GM12878 (cell line): ENCODE measurements at regions of chr6 and their contacts with region 1.

Region 1: DNA sequence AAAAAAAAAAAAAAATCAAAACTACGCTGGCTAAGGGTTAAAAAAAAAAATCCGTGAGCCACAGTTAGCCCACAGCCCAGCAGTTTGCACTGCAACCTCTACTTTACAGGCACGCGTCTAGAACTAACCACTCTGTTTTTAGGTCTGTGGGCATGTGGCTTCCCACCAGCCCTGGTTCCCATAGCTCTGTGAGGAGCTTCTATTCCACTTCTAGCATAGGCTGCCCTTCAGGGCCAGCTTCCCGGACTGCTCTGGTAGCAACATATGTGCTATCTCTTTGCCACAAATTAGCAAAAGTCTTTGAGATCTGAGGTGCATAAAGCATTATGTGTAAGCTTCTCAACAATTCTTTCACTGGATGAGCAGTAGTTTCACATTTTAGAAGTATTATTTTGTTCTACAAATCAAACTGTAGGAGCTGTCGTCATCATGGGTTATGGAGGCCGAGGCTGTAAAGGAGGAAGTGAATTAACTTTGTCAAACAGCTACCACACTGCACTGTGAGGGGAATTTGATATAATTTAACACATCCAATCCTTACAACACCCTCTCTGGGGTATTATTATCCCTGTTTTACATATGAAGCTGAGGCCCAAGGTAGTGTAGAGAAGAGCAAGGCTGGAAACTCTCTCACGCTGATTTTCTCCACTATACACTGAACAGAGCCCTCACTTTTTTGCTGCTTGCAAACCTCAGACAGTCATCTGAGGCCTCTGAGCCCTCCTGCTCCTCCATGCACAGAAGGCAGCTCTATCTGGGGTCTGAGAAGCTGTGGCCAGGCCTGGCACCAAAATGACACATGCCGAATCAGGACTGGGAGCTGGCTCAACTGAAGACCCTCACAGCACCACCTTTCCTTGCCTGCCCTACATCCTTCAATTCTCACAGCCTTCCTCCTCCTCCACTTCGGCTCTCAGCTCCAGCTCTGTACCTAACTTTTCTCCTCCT is 35.4 kb downstream of the MAN1A1 start:
- DNase-seq: peak; percentile 42
- ATAC-seq: peak; percentile 78
- H3K4me3 ChIP-seq: no peak overlapping the region; the same call in 1 of the 2 replicates
- H3K27ac ChIP-seq: peak overlapping the region; percentile 73
- H3K4me1 ChIP-seq: peaks cover 28% of the 10 kb centered on the region
- H3K27me3 ChIP-seq: no peaks in the 10 kb centered on the region
- CTCF ChIP-seq: no peak
- EP300 ChIP-seq: peak in 1 of 2 experiments; percentile 86; a peak in 1 of 4 replicates
- POLR2A ChIP-seq: peak; percentile 46; the same call in 1 of the 2 replicates
- RAD21 ChIP-seq: no peak

Region 2: DNA sequence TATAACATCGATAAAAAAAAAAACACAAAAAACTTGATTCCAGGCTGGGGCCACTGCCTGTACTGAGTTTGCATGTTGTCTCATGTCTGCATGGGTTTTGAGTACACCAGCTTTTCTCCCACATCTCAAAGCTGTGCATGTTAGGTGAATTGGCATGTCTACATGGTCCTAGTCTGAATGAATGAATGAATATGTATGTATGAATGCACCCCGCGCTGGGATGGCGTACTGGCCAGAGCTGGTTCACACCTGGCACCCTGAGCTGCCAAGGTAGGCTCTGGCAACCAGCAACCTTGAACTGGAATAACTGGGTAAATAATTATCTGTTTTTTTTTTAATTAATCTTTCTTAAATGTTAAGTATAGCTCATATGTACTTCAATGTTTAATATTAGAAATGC is 95.7 kb before region 1 on chr6:
- CTCF ChIA-PET with region 1: interaction called, 4 read pairs
- POLR2A ChIA-PET with region 1: interaction called, 4 read pairs
- RAD21 ChIA-PET with region 1: interaction called, 10 read pairs
- SMC1A ChIA-PET with region 1: interaction called, 9 read pairs
- in situ Hi-C with region 1: no loop called
- intact Hi-C with region 1: loop called (anchors 5 kb)
- DNase-seq: no peak
- ATAC-seq: no peak
- H3K4me3 ChIP-seq: no peak overlapping the region
- H3K27ac ChIP-seq: no peak overlapping the region
- H3K4me1 ChIP-seq: no peaks in the 10 kb centered on the region
- H3K27me3 ChIP-seq: no peaks in the 10 kb centered on the region
- CTCF ChIP-seq: no peak
- EP300 ChIP-seq: no peak
- POLR2A ChIP-seq: no peak
- RAD21 ChIP-seq: no peak

Region 3: DNA sequence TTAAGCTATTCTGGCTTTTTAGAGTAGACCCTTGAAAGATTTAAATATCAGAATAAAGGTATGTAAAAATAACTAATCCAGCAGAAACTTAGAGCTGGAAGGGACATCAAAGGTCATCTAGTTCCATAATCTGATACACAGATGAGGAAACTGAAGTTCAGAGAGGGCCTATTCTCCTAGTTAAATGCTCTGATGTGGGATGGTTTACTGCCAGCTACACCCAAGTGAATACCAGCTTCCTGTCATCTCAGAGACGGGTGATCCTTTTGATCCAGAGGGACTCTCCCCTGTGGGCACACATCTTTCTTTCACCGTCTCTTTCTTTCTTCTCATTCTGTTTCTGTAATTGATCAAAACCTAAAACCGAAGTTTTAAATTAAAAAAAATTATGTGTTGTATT is 58.7 kb before region 1 on chr6:
- CTCF ChIA-PET with region 1: interaction called, 7 read pairs
- POLR2A ChIA-PET with region 1: no interaction called
- RAD21 ChIA-PET with region 1: interaction called, 9 read pairs
- SMC1A ChIA-PET with region 1: interaction called, 14 read pairs
- in situ Hi-C with region 1: no loop called
- intact Hi-C with region 1: no loop called
- DNase-seq: no peak
- ATAC-seq: 0 out of 3 replicates have a peak, but pooled peaks have one; percentile 29
- H3K4me3 ChIP-seq: no peak overlapping the region
- H3K27ac ChIP-seq: no peak overlapping the region
- H3K4me1 ChIP-seq: no peaks in the 10 kb centered on the region
- H3K27me3 ChIP-seq: no peaks in the 10 kb centered on the region
- CTCF ChIP-seq: no peak
- EP300 ChIP-seq: no peak
- POLR2A ChIP-seq: no peak
- RAD21 ChIP-seq: no peak

Region 4: DNA sequence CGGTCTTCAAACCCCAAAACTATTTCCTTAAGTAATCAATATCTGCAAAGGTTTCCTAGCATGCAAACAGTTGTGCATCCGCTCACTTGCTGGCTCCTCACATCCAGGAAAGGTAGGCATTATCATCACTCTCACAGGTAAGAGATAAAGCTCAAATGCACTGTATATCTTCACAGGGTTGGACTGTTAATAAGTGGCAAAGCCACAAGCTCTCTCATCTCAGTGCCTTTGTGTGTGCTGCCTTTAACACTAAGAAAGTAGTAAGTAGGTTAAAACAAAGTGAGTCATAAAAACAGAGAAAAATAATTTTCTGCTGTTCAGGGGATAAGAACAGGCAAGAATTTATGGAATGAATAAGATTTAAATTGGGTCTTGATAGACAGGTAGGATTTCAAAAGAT is 14.0 kb after region 1 on chr6:
- CTCF ChIA-PET with region 1: interaction called, 62 read pairs
- POLR2A ChIA-PET with region 1: interaction called, 114 read pairs
- RAD21 ChIA-PET with region 1: interaction called, 414 read pairs
- SMC1A ChIA-PET with region 1: interaction called, 359 read pairs
- in situ Hi-C with region 1: no loop called
- intact Hi-C with region 1: no loop called
- DNase-seq: no peak
- ATAC-seq: peak; percentile 27
- H3K4me3 ChIP-seq: no peak overlapping the region
- H3K27ac ChIP-seq: no peak overlapping the region
- H3K4me1 ChIP-seq: no peaks in the 10 kb centered on the region
- H3K27me3 ChIP-seq: no peaks in the 10 kb centered on the region
- CTCF ChIP-seq: no peak
- EP300 ChIP-seq: no peak
- POLR2A ChIP-seq: no peak
- RAD21 ChIP-seq: no peak

Region 5: DNA sequence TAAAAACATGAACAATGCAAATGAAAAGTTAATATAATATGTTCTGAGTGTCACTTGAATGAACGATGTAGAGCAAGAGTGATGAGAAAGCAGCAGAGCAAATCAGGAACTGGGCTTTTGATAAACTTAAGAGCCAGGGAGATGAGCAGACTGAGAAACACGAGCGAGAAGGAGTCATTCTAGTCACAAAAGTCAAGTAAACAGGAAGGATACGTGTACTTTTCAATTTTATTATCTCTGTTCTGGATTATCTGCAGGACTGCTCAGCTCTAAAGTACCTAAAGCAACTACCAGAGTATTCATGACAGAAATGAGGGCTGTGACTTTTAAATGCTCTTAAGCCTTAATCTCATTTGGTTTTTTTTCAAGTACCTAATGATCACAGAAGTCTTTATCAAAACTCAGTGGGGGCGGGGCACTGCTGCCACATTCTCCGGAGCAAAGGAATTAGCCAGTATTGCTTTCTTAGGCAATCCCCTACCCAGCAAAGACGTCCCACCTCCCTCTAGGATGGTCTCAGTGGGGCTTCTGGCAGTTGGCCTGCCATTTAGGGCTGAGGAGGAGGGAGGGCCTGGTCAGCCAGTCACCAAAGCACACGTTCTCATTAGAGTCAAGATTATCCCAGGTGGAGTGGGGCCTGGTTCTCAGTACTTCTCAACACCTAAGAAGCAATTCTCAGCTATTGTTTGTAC is 26.7 kb after region 1 on chr6:
- CTCF ChIA-PET with region 1: interaction called, 62 read pairs
- POLR2A ChIA-PET with region 1: interaction called, 114 read pairs
- RAD21 ChIA-PET with region 1: interaction called, 414 read pairs
- SMC1A ChIA-PET with region 1: interaction called, 359 read pairs
- in situ Hi-C with region 1: no loop called
- intact Hi-C with region 1: no loop called
- DNase-seq: no peak
- ATAC-seq: peak; percentile 8
- H3K4me3 ChIP-seq: 0 out of 2 replicates have a peak overlapping the region, but pooled peaks have one; percentile 14
- H3K27ac ChIP-seq: peak overlapping the region; percentile 10; the same call in 1 of the 2 replicates
- H3K4me1 ChIP-seq: peaks cover 10% of the 10 kb centered on the region
- H3K27me3 ChIP-seq: no peaks in the 10 kb centered on the region
- CTCF ChIP-seq: no peak
- EP300 ChIP-seq: no peak
- POLR2A ChIP-seq: no peak
- RAD21 ChIP-seq: no peak

Region 6: GRCh38 chr6:119442776-119443184 is 128.6 kb after region 1 on chr6:
- CTCF ChIA-PET with region 1: no interaction called
- POLR2A ChIA-PET with region 1: no interaction called
- RAD21 ChIA-PET with region 1: no interaction called
- SMC1A ChIA-PET with region 1: no interaction called
- in situ Hi-C with region 1: no loop called
- intact Hi-C with region 1: no loop called
- DNase-seq: no peak
- ATAC-seq: peak; percentile 7; the same call in 1 of the 3 replicates
- H3K4me3 ChIP-seq: no peak overlapping the region
- H3K27ac ChIP-seq: peak overlapping the region; percentile 42
- H3K4me1 ChIP-seq: peaks cover 44% of the 10 kb centered on the region
- H3K27me3 ChIP-seq: no peaks in the 10 kb centered on the region
- CTCF ChIP-seq: no peak
- EP300 ChIP-seq: peak in 1 of 2 experiments; percentile 52; a peak in 2 of 4 replicates
- POLR2A ChIP-seq: no peak
- RAD21 ChIP-seq: no peak